GM10248 (cell line): ENCODE measurements at regions of chr5 and their contacts with region 1.

Region 1: DNA sequence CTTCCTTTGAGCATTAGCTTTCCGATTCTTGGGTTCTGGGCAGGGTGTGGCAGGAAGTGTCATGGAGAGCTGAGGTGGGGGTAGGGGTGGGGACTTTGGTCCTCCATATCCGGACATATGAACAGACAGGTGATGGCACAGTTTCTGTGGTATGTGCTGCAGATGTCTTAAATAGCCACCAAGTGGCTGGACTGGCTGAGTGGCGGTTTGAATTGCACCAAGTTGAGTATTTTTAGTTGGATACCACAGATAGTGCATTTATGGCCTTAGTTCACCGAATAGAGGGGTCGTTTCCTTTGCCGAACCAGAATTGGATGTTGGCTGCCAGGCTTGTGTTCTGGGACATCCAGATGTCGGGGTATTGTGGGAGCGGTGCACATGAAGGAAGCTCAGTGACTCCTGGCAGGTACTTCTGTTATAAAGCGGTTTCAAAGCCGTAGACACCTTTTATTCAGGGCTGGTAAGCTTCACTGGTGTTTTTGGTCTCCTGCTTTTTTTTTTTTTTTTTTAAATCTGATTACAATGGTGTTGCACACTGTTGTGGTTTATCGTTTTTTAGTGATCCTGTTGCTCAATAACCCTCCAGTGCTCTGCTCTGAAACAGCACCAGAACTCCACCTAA is 15.1 kb upstream of the TNFAIP8 start:
- DNase-seq: peak; percentile 55
- CTCF ChIP-seq: no peak

Region 2: DNA sequence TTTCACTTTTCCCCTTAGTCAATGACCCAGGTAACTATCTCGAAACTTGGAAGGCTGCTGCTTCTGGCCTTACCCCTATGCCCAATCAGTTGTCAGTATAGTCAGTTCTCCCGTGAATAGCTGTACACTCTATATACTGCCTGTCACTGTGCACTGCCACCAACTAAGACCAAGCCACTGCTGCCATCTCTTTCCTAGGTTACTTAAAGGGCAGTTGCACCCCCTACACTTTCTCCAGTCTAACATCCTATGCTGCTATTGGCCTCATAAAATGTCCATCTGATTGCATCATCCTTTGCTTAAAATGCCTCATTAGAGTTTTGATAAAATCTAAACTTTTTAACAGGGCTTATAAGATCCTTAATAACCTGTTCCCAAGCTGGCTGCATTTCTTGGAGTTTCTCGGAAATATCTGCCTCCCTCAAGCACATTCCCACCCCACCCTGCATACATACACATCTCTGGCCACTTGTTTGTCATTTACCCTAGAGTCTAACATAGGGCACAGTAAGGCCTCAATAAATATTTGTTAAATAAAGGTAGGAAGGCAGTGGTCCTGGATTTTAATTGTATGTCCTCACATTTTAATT is 17.7 kb before region 1 on chr5:
- CTCF ChIA-PET with region 1: interaction called, 191 read pairs
- POLR2A ChIA-PET with region 1: no interaction called
- DNase-seq: no peak
- CTCF ChIP-seq: no peak

Region 3: GRCh38 chr5:119328753-119329602 is 11.7 kb before region 1 on chr5:
- CTCF ChIA-PET with region 1: interaction called, 24 read pairs
- POLR2A ChIA-PET with region 1: no interaction called
- DNase-seq: no peak
- CTCF ChIP-seq: no peak

Region 4: GRCh38 chr5:119355685-119356611 is 15.2 kb after region 1 on chr5 and contains the start of gene TNFAIP8:
- CTCF ChIA-PET with region 1: interaction called, 159 read pairs
- POLR2A ChIA-PET with region 1: interaction called, 7 read pairs
- DNase-seq: peak; percentile 81
- CTCF ChIP-seq: no peak